Activated T-helper 2 cell treated with anti-CD3 and anti-CD28 coated beads, Interferon-gamma antibody, Interleukin-2, Interleukin-4, amounts not matched to agents 10 μg/mL and 5 μg/mL and 100 μg/mL, durations not matched to agents 14 hours and 24 hours and 36 hours (primary cell): ENCODE measurements at regions of chr1 and their contacts with region 1.

Region 1: GRCh38 chr1:8560611-8561544 is 243.0 kb downstream of the SLC45A1 start:
- DNase-seq: no peak
- H3K4me3 Mint-ChIP-seq: peak overlapping the region; percentile 57
- H3K27ac Mint-ChIP-seq: peak overlapping the region; percentile 85
- H3K4me1 Mint-ChIP-seq: peaks cover 53% of the 10 kb centered on the region
- H3K27me3 Mint-ChIP-seq: no peaks in the 10 kb centered on the region

Region 2: DNA sequence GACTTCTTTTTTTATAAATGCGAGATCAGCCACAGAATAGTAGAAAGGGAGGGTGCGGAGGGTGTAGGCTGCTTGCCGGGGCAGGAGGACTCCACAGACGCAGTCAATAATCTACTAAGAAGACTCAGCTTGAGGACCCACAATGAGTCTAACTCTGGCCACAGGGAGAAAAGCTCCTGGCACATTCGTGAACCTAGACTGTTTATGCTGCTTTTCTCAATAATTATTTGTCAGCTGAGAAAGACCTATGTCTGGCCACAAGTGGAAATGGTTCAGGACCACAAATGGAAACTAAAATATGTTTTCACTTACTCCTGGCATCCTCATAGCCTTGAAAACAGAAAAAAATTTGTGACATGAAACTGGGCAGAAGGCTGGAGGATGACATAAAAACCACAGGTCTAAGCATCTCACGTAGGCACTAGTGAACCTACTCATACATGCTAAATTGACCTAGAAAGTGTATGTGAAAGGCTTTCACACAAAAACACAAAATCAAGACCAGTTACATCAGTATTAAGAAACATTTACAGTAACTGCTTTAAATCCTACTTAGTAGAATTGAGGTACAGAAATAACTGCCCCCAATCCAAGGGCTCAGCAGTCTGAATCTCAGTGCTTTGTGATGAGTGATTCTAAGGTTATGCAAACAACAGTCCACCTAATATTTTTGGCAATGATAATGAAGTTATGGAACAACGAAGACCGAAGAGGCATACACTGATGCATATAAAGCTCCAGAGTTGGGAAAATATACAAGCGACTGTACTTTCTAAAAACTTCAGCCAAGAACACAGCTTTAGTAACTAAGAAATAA is 83.5 kb before region 1 on chr1:
- intact Hi-C with region 1: loop called (anchors 1 kb)
- DNase-seq: no peak
- H3K4me3 Mint-ChIP-seq: peak overlapping the region; percentile 47
- H3K27ac Mint-ChIP-seq: peak overlapping the region; percentile 88
- H3K4me1 Mint-ChIP-seq: peaks cover 62% of the 10 kb centered on the region
- H3K27me3 Mint-ChIP-seq: no peaks in the 10 kb centered on the region

Region 3: DNA sequence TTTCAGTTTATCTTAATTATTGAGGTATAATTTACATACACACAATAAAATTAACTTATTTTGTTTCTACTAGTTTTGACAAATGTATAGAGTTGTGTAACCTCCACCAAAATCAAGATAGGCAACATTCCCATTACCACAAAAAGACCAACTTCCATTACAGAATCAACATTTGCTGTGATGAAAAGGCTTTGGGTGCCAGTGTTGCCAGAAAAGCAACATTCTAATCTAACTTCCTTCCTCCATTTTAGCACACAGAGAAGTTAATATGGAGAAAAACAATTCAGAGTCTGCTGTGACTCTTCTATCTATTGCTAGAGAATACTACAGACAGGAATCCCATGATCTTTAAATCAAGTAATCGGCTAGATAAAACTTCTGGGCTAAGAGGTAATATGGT is 11.2 kb after region 1 on chr1:
- intact Hi-C with region 1: no loop called
- DNase-seq: no peak
- H3K4me3 Mint-ChIP-seq: no peak overlapping the region
- H3K27ac Mint-ChIP-seq: no peak overlapping the region
- H3K4me1 Mint-ChIP-seq: peaks cover 19% of the 10 kb centered on the region
- H3K27me3 Mint-ChIP-seq: no peaks in the 10 kb centered on the region

Region 4: DNA sequence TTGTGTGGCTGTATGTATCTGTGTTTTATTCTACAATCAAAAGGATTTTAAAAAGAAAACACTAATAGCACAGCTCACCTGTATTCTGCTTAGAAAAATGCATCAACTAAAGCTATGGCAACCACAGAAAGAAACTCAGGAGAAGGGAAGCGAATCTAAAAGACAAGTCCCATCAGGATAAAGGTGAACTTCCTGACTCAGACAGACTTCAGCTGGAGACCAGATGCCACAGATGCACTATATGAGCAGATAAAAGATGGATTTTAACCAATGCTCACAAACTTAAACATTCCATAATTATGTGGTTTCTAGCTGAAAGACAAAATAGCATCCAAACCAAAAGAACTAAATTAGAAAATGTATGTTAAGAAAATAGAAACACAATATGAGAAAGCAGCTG is 25.6 kb after region 1 on chr1:
- intact Hi-C with region 1: no loop called
- DNase-seq: no peak
- H3K4me3 Mint-ChIP-seq: no peak overlapping the region
- H3K27ac Mint-ChIP-seq: no peak overlapping the region
- H3K4me1 Mint-ChIP-seq: peaks cover 38% of the 10 kb centered on the region
- H3K27me3 Mint-ChIP-seq: no peaks in the 10 kb centered on the region

Region 5: DNA sequence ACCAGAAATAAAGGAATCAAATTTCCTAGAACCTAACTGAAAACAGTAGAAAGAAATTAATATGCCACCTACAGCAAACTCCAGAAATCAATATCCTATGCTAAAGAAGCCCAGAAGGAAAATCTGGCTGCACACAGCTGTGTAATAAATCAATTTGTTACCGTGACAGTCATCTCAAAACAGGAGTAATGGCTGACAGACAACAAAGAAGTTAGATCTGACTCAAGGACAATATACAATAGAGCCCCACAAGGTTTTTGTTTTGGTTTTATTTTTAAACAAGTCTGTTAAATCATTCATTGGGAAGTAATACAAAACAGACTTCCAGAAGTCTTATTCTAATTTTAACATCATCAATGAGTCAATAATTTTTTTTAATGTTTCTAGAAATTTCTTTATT is 88.1 kb after region 1 on chr1:
- intact Hi-C with region 1: loop called (anchors 2 kb)
- DNase-seq: no peak
- H3K4me3 Mint-ChIP-seq: no peak overlapping the region
- H3K27ac Mint-ChIP-seq: peak overlapping the region; percentile 46
- H3K4me1 Mint-ChIP-seq: peaks cover 61% of the 10 kb centered on the region
- H3K27me3 Mint-ChIP-seq: no peaks in the 10 kb centered on the region

Region 6: DNA sequence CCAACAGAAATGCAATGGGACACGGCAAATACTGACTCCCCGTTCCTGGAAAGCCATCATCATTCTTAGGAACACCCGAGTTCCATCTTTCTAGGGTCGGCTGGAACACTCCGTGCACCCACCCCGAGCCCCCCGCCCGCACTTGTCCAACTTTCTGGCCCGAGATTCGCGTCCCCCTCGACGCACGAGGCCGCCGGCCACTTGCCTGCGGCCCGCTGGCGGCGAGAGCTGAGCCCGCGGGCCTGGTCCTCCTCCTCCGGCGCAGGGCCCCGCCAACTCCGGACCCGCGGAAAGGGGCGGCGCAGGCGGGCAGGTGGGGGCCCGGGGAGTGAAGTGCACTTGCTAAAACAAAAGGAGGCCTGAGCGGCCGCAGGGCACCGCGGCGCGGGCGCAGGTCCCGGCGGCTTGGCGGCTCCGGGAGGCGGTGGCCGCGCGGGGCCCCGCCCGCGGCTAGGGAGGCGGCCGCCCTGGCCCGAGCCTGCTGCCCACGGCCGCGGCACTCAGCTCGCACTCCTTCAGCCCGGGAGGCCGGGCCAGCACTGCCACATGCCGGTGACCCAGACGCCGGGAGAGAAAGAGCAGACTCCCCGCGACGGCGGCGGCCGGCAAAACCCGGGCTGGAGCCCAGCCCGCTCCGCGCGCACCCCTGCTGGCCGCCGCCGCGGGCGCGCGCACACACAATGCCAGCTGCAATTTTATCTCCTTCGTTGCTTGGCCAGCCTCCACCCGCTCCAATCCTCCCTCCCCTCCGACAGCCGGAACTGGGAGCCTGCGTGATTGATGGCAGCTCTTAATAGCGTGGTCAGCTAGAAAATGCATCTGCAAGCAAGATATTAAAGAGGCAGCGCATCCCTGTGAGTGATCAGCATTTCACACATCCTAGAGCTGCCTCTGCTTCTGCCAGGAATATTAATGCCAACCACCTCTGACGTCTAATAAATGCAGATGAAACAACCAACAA is 142.3 kb after region 1 on chr1:
- intact Hi-C with region 1: loop called (anchors 1 kb)
- DNase-seq: peak; percentile 73
- H3K4me3 Mint-ChIP-seq: peak overlapping the region; percentile 88
- H3K27ac Mint-ChIP-seq: peak overlapping the region; percentile 87
- H3K4me1 Mint-ChIP-seq: peaks cover 46% of the 10 kb centered on the region
- H3K27me3 Mint-ChIP-seq: no peaks in the 10 kb centered on the region

Region 7: GRCh38 chr1:8817406-8818324 is 256.8 kb after region 1 on chr1 and contains the start of gene RERE:
- intact Hi-C with region 1: loop called (anchors 2 kb)
- DNase-seq: peak; percentile 96
- H3K4me3 Mint-ChIP-seq: peak within 1 kb of the TSS; percentile 86
- H3K27ac Mint-ChIP-seq: peak within 1 kb of the TSS; percentile 84
- H3K4me1 Mint-ChIP-seq: peaks cover 41% of the 10 kb centered on the region
- H3K27me3 Mint-ChIP-seq: peaks cover 11% of the 10 kb centered on the region
- total RNA-seq, gene RERE: 139 and 154 TPM in 2 replicates